Left cardiac atrium (tissue), 4 donors: ENCODE measurements at regions of chr12 and their contacts with region 1.

Region 1: GRCh38 chr12:128783129-128783574 is 40.6 kb downstream of the SLC15A4 start:
- DNase-seq: no peak
- ATAC-seq: no peak

Region 2: GRCh38 chr12:129911428-129912049 is 1128.4 kb after region 1 on chr12:
- intact Hi-C with region 1: loop called in 1 of 2 experiments (anchors 10 kb)
- DNase-seq: peak; percentile 43
- ATAC-seq: peak; percentile 84 to 90